ENCODE measurements at regions of chr1 and their contacts with region 1.

Region 1: DNA sequence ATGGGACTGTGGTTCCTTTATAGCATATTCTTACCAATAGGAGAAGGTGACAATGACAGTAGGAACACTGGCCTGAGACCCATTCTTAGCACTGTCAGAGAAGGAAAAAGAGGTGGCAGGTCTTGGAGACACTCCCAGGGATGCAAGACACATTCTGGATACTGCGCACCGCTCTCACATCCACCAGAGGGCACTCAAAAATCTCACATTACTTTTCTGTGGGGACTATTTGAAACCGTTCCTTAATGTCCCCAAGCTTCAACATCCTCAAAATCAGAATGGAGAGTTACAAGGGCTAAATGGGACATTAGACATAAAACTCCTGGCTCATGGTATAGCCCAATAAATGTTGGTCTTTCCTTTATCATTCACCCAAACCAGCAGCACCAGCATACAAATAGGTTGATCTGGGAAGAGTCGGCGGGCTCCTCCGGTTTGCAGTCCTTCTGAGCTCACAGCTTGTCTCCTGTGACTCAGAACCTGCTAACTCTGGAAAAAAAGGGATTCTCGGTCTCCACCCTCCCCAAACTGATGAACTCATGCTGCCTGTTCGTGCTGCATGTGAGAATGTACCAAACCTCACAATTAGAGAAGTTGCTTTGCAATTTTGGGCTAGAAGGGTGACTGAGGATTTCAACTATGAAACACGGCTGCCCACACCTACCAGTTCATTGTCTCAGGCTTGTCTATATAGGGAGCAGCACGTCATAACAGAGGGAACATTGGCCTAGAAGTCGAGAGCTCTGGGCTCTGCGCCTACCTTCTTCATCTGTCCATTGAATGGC is 40.2 kb downstream of the IL12RB2 start:
- DNase-seq: peak; percentile 13 to 56
- H3K4me3 ChIP-seq: no peak overlapping the region
- H3K27ac ChIP-seq: no peak overlapping the region
- H3K4me1 ChIP-seq: peaks cover 0 to 4% (median 3%) of the 10 kb centered on the region in 4 experiments; a peak in 1 of 7 replicates
- H3K27me3 ChIP-seq: no peaks in the 10 kb centered on the region
- CTCF ChIP-seq: peak; percentile 72 to 85 (median 75)
- EP300 ChIP-seq: no peak
- POLR2A ChIP-seq: no peak
- RAD21 ChIP-seq: peak; percentile 85

Region 2: DNA sequence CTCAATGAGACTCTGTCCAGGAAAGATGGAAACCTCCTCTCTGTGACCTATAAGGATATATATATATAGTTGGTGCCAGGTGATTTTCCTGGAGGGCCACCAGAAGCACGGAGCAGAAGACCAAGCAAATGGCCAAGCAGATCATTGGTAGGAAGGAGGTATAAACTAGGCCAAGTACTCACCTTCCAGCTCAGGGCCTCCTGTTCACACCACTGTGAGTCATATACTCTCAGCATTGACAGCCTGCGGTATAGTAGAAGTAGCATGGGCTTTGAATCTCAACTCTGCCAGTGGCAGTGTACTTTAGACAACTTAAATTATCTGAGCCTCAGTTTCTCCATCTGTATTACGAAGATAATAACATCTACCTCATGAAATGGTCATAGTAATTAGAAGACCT is 24.8 kb before region 1 on chr1:
- CTCF ChIA-PET with region 1: interaction called, 33 read pairs
- POLR2A ChIA-PET with region 1: no interaction called
- DNase-seq: no peak
- H3K4me3 ChIP-seq: no peak overlapping the region
- H3K27ac ChIP-seq: no peak overlapping the region
- H3K4me1 ChIP-seq: peaks cover 0 to 3% (median 0%) of the 10 kb centered on the region in 4 experiments; a peak in 1 of 7 replicates
- H3K27me3 ChIP-seq: no peaks in the 10 kb centered on the region
- CTCF ChIP-seq: no peak
- EP300 ChIP-seq: no peak
- POLR2A ChIP-seq: no peak
- RAD21 ChIP-seq: no peak

Region 3: GRCh38 chr1:67372136-67372535 is 24.3 kb after region 1 on chr1:
- CTCF ChIA-PET with region 1: interaction called, 20 read pairs
- POLR2A ChIA-PET with region 1: interaction called, 4 read pairs
- DNase-seq: no peak
- H3K4me3 ChIP-seq: no peak overlapping the region
- H3K27ac ChIP-seq: no peak overlapping the region
- H3K4me1 ChIP-seq: peaks cover 0 to 7% (median 4%) of the 10 kb centered on the region in 4 experiments; a peak in 3 of 7 replicates
- H3K27me3 ChIP-seq: no peaks in the 10 kb centered on the region
- CTCF ChIP-seq: no peak
- EP300 ChIP-seq: no peak
- POLR2A ChIP-seq: no peak
- RAD21 ChIP-seq: no peak

Region 4: GRCh38 chr1:67418839-67419586 is 71.1 kb after region 1 on chr1:
- CTCF ChIA-PET with region 1: interaction called, 30 read pairs
- POLR2A ChIA-PET with region 1: no interaction called
- DNase-seq: no peak
- H3K4me3 ChIP-seq: no peak overlapping the region
- H3K27ac ChIP-seq: no peak overlapping the region
- H3K4me1 ChIP-seq: no peaks in the 10 kb centered on the region
- H3K27me3 ChIP-seq: no peaks in the 10 kb centered on the region
- CTCF ChIP-seq: no peak
- EP300 ChIP-seq: no peak
- POLR2A ChIP-seq: no peak
- RAD21 ChIP-seq: no peak

Region 5: DNA sequence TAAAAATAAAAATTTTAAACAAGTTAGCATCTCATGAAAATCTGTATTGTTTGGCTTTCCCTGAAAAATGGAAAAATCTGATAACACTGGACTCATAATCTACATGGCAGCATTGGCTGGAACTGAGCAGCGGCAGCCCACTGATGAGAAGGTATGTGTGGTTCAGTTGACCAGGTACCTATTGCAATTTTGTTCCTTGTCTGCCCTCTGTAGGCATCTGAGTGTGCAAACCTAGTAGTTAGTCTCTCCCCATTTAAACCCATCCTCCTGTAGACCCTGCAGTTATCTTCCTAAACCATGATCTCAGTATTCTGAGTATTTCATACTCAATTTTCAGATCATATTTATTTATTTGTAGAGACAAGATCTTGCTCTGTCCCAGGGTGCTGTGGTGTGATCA is 141.8 kb after region 1 on chr1:
- CTCF ChIA-PET with region 1: interaction called, 93 read pairs
- POLR2A ChIA-PET with region 1: no interaction called
- DNase-seq: no peak
- H3K4me3 ChIP-seq: no peak overlapping the region
- H3K27ac ChIP-seq: no peak overlapping the region
- H3K4me1 ChIP-seq: peaks cover 0 to under 1% (median 0%) of the 10 kb centered on the region in 4 experiments; a peak in 2 of 7 replicates
- H3K27me3 ChIP-seq: no peaks in the 10 kb centered on the region
- CTCF ChIP-seq: peak in 2 of 3 experiments; percentile 60 to 64; a peak in 2 of 4 replicates
- EP300 ChIP-seq: no peak
- POLR2A ChIP-seq: no peak
- RAD21 ChIP-seq: peak; percentile 85 to 88